PC-3 (cell line): ENCODE measurements at regions of chr1 and their contacts with region 1.

Region 1: GRCh38 chr1:208652296-208653160 is 408.3 kb upstream of the PLXNA2 start:
- DNase-seq: peak; percentile 89
- ATAC-seq: peak; percentile 90
- H3K4me3 ChIP-seq: no peak overlapping the region
- H3K27ac ChIP-seq: no peak overlapping the region
- H3K4me1 ChIP-seq: peaks cover 19% of the 10 kb centered on the region
- H3K27me3 ChIP-seq: no peaks in the 10 kb centered on the region
- CTCF ChIP-seq: peak; percentile 95

Region 2: GRCh38 chr1:208615371-208615770 is 37.2 kb before region 1 on chr1:
- CTCF ChIA-PET with region 1: no interaction called
- POLR2A ChIA-PET with region 1: no interaction called
- intact Hi-C with region 1: no loop called
- DNase-seq: no peak
- ATAC-seq: no peak
- H3K4me3 ChIP-seq: no peak overlapping the region
- H3K27ac ChIP-seq: no peak overlapping the region
- H3K4me1 ChIP-seq: no peaks in the 10 kb centered on the region
- H3K27me3 ChIP-seq: no peaks in the 10 kb centered on the region
- CTCF ChIP-seq: no peak

Region 3: GRCh38 chr1:208997726-208998312 is 345.3 kb after region 1 on chr1:
- CTCF ChIA-PET with region 1: interaction called, 3 read pairs
- POLR2A ChIA-PET with region 1: no interaction called
- intact Hi-C with region 1: loop called (anchors 1 kb)
- DNase-seq: peak; percentile 72
- ATAC-seq: 0 out of 2 replicates have a peak, but pooled peaks have one; percentile 29
- H3K4me3 ChIP-seq: no peak overlapping the region
- H3K27ac ChIP-seq: no peak overlapping the region
- H3K4me1 ChIP-seq: no peaks in the 10 kb centered on the region
- H3K27me3 ChIP-seq: no peaks in the 10 kb centered on the region
- CTCF ChIP-seq: peak; percentile 86

Region 4: GRCh38 chr1:209076688-209077087 is 424.2 kb after region 1 on chr1:
- CTCF ChIA-PET with region 1: no interaction called
- POLR2A ChIA-PET with region 1: no interaction called
- intact Hi-C with region 1: loop called (anchors 10 kb)
- DNase-seq: peak; percentile 67
- ATAC-seq: no peak
- H3K4me3 ChIP-seq: no peak overlapping the region
- H3K27ac ChIP-seq: no peak overlapping the region
- H3K4me1 ChIP-seq: peaks cover 43% of the 10 kb centered on the region
- H3K27me3 ChIP-seq: no peaks in the 10 kb centered on the region
- CTCF ChIP-seq: peak; percentile 86

Region 5: DNA sequence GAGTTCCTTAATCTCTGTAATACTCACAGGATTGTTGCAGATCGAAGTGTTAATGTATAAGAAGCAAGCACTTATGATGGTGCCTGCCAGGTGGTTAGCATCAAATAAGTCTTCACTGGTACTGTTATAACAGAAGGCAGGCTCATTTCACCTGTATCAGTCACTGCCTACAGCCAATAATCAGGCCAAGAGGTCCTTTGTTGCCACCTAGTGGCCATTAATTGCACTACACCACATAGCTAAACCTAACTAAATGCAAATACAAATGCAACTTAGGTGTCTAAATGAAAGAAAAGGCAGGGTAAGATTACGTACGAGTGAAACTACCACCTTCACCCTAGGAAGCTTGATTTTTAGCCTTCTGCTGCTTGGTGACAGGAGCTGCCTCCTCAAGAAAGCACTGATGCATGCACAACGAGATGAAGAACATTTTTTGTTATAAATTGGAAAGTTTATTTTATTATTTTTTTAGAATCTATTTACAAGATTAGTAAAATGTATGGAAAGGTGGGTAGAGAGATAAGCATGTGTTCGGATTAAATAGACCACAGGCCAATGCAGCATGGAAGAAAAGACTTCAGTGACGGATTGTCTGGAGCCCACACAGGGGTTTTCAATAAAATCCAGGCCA is 596.2 kb after region 1 on chr1:
- CTCF ChIA-PET with region 1: no interaction called
- POLR2A ChIA-PET with region 1: no interaction called
- intact Hi-C with region 1: loop called (anchors 1 kb)
- DNase-seq: peak; percentile 97
- ATAC-seq: peak; percentile 58
- H3K4me3 ChIP-seq: no peak overlapping the region
- H3K27ac ChIP-seq: no peak overlapping the region
- H3K4me1 ChIP-seq: peaks cover 44% of the 10 kb centered on the region
- H3K27me3 ChIP-seq: no peaks in the 10 kb centered on the region
- CTCF ChIP-seq: peak; percentile 98